CD8-positive, alpha-beta T cell (primary cell): ENCODE measurements at regions of chr6 and their contacts with region 1.

Region 1: DNA sequence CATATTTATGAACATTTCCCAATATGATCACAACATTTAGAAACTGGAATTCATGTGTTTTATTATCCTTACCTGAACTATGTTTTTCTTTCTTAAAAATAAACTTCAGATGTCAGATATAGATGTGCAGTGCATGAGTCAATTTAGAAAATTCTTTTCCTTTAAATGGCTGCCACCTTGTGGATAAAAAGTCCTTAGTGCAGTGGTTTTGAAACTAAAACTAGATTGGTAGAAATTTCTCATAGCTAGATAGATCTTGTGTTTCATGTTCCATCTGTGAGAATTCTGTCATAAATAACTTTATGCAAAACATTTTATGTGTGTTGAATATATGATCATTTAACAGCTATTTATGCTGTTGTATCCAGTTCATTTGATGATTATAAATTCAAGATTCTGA is 134.9 kb downstream of the KLHL32 start:
- DNase-seq: peak in 2 of 9 experiments; percentile 40 to 54
- ATAC-seq: peak; percentile 42
- H3K4me3 ChIP-seq: no peak overlapping the region
- H3K4me3 Mint-ChIP-seq: no peak overlapping the region
- H3K27ac ChIP-seq: no peak overlapping the region
- H3K27ac Mint-ChIP-seq: no peak overlapping the region
- H3K4me1 ChIP-seq: no peaks in the 10 kb centered on the region
- H3K4me1 Mint-ChIP-seq: no peaks in the 10 kb centered on the region
- H3K27me3 ChIP-seq: no peaks in the 10 kb centered on the region
- H3K27me3 Mint-ChIP-seq: no peaks in the 10 kb centered on the region
- CTCF ChIP-seq: peak; percentile 71

Region 2: DNA sequence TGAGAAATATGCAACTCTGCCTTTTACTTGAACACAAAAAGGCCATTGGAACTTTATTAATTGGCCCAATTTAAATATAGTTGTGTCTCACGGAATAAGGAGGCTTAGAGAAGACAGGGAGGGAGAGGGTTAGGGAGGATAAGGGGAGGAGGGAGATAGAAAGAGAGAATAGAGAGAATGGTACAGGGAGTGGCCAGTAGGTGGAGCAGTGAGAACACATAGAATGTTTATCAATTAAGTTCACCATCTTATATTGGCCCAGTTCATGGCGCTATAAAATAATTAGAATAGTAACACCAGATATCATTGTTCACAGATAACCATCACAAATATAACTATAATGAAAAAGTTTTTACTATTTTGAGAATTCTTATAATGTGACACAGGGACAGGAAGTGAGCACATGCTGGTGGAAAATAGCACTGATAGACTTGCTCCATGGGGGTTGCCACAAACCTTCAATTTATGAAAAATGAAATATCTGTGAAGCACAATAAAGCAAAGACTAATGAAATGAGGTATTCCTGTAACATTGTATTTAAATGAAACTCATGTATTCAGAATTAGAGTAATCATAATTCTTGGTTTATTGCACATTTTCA is 1856.2 kb before region 1 on chr6:
- CTCF ChIA-PET with region 1: no interaction called
- POLR2A ChIA-PET with region 1: no interaction called
- intact Hi-C with region 1: loop called in 1 of 2 experiments (anchors 5 kb)
- DNase-seq: peak in 2 of 9 experiments; percentile 11 to 13
- ATAC-seq: no peak
- H3K4me3 ChIP-seq: no peak overlapping the region
- H3K4me3 Mint-ChIP-seq: no peak overlapping the region
- H3K27ac ChIP-seq: no peak overlapping the region
- H3K27ac Mint-ChIP-seq: no peak overlapping the region
- H3K4me1 ChIP-seq: no peaks in the 10 kb centered on the region
- H3K4me1 Mint-ChIP-seq: no peaks in the 10 kb centered on the region
- H3K27me3 ChIP-seq: no peaks in the 10 kb centered on the region
- H3K27me3 Mint-ChIP-seq: no peaks in the 10 kb centered on the region
- CTCF ChIP-seq: peak; percentile 43

Region 3: DNA sequence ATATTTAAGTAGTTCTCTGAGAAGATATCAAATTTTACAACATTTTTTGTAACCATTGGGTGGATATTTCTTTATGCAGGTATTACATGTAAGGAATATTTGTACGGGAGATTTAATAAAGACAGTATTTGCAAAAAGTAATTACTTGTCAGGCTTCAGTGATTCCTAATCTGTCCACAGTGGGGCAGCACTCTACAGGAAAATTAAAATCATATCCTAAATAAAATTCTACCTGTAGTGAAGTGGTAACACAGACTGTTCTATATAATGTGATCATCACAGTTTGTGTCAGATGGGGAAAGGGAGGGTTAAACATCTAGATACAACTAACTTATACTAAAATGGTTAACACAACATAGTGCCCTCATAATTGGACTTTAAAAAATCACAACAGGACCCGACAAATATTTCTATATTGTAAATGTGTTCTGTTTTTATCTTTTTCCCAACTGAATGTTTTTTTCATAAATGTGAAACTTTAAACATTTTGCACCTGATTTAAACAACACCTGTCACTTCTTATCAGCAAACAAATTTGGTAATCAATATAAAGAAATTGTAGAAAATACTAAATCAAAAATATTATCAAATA is 1627.7 kb before region 1 on chr6:
- CTCF ChIA-PET with region 1: no interaction called
- POLR2A ChIA-PET with region 1: no interaction called
- intact Hi-C with region 1: loop called (anchors 2 kb)
- DNase-seq: peak in 6 of 9 experiments; percentile 4 to 41 (median 32)
- ATAC-seq: no peak
- H3K4me3 ChIP-seq: no peak overlapping the region
- H3K4me3 Mint-ChIP-seq: no peak overlapping the region
- H3K27ac ChIP-seq: no peak overlapping the region
- H3K27ac Mint-ChIP-seq: no peak overlapping the region
- H3K4me1 ChIP-seq: no peaks in the 10 kb centered on the region
- H3K4me1 Mint-ChIP-seq: no peaks in the 10 kb centered on the region
- H3K27me3 ChIP-seq: no peaks in the 10 kb centered on the region
- H3K27me3 Mint-ChIP-seq: no peaks in the 10 kb centered on the region
- CTCF ChIP-seq: peak; percentile 70

Region 4: DNA sequence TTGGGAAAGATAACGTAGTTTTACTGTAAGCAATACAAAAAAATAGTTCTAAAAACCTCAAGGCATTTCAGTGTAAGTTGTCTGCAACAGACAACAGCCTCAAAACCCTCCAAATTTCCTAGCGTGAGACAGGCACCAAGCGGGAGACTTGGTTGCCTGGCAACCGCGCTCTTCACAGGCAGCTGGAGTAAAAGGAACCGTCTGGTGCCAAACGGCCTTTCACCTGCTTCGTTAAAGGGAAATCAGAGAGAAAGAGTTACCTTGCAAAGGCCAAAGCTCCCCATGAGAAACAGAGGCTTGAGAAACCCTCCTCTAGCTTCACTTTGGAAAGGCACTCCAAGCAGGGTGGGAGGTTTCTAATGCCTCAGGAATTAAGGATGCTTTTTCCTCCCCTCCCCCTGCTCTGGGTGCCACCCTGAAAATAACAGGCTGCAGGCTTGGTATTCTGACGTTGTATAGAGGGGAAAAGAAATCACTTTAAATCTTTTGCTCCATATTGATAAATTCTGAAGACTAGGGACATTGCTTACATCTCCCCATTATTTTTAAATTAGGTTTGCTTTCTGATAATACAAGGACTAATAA is 667.6 kb before region 1 on chr6:
- CTCF ChIA-PET with region 1: no interaction called
- POLR2A ChIA-PET with region 1: no interaction called
- intact Hi-C with region 1: loop called in 1 of 2 experiments (anchors 10 kb)
- DNase-seq: peak in 2 of 9 experiments; percentile 12 to 27
- ATAC-seq: no peak
- H3K4me3 ChIP-seq: no peak overlapping the region
- H3K4me3 Mint-ChIP-seq: no peak overlapping the region
- H3K27ac ChIP-seq: no peak overlapping the region
- H3K27ac Mint-ChIP-seq: no peak overlapping the region
- H3K4me1 ChIP-seq: no peaks in the 10 kb centered on the region
- H3K4me1 Mint-ChIP-seq: peaks cover 4% of the 10 kb centered on the region
- H3K27me3 ChIP-seq: no peaks in the 10 kb centered on the region
- H3K27me3 Mint-ChIP-seq: peaks cover 7% of the 10 kb centered on the region
- CTCF ChIP-seq: no peak

Region 5: DNA sequence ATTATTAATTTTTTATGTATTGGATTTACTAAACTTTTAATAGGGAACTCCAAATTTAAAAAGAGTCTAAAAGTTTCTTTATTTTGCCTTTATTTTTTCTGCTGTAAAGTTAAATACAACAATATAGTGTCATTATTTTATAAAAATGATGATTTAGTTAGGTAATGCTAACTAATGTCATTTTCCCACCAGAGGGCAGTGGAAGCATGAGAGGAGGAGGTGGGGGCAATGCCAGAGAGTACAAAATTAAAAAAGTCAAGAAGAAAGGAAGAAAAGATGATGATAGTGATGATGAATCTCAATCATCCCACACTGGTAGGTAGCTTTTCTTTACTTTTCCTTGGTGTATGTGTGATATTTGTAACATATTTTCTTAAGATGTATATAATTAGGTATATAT is 516.8 kb before region 1 on chr6:
- CTCF ChIA-PET with region 1: no interaction called
- POLR2A ChIA-PET with region 1: no interaction called
- intact Hi-C with region 1: loop called (anchors 2 kb)
- DNase-seq: peak in 2 of 9 experiments; percentile 26 to 38
- ATAC-seq: no peak
- H3K4me3 ChIP-seq: no peak overlapping the region
- H3K4me3 Mint-ChIP-seq: no peak overlapping the region
- H3K27ac ChIP-seq: no peak overlapping the region
- H3K27ac Mint-ChIP-seq: no peak overlapping the region
- H3K4me1 ChIP-seq: no peaks in the 10 kb centered on the region
- H3K4me1 Mint-ChIP-seq: no peaks in the 10 kb centered on the region
- H3K27me3 ChIP-seq: no peaks in the 10 kb centered on the region
- H3K27me3 Mint-ChIP-seq: no peaks in the 10 kb centered on the region
- CTCF ChIP-seq: peak; percentile 58

Region 6: DNA sequence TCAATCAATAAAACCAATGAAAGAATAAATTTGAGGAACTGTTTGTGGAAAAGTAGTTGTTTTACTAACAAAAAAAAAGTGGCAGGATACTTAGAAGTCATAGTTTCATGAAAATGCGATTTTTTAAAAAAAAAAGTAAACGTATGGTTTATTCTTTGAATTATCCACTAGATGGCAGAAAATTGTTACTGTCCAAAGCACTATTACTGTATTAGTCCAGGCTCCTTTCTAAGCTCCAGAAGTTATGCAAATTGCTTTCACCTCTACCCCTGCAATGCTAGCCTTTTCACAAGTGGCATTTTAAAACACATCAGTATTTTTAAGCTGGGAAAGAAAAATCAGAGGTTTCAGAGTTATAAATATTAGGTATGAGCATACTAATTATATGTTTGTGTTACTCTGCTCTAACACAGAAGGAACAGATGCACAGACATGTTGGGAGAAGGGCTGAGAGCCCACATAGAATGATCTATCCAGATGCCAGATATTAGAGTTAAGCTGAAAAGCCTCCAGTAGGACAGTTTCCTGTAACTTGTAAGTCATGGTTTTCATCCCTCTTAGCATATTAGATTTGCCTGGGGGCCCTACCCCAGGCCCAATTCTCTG is 432.6 kb before region 1 on chr6:
- CTCF ChIA-PET with region 1: interaction called, 38 read pairs
- POLR2A ChIA-PET with region 1: interaction called, 4 read pairs
- intact Hi-C with region 1: loop called (anchors 1 kb)
- DNase-seq: peak in 2 of 9 experiments; percentile 15 to 35
- ATAC-seq: peak; percentile 36
- H3K4me3 ChIP-seq: no peak overlapping the region
- H3K4me3 Mint-ChIP-seq: no peak overlapping the region
- H3K27ac ChIP-seq: no peak overlapping the region
- H3K27ac Mint-ChIP-seq: no peak overlapping the region
- H3K4me1 ChIP-seq: no peaks in the 10 kb centered on the region
- H3K4me1 Mint-ChIP-seq: no peaks in the 10 kb centered on the region
- H3K27me3 ChIP-seq: no peaks in the 10 kb centered on the region
- H3K27me3 Mint-ChIP-seq: peaks cover 9% of the 10 kb centered on the region
- CTCF ChIP-seq: peak; percentile 44

Region 7: DNA sequence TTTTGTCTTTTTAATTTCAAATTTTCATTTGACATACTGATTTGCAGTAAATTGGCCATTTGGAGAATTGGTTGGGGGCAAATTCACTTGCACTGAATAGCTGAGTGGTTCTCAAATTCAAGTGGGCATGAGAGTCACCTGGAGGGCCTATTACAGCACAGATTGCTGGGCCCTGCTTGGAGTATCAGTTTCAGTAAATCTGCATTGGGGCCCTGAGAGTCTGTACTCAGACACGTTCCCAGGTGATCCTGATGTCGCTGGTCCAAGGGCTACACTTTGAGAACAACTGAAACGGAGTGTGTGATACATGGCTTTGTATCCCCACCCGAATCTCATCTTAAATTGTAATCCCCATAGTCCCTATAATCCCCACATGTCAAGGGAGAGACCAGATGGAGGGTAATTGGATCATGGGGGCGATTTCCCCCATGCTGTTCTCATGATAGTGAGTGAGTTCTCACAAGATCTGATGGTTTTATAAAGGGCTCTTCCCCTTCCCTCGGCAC is 19.1 kb before region 1 on chr6:
- CTCF ChIA-PET with region 1: no interaction called
- POLR2A ChIA-PET with region 1: no interaction called
- intact Hi-C with region 1: no loop called
- DNase-seq: no peak
- ATAC-seq: no peak
- H3K4me3 ChIP-seq: no peak overlapping the region
- H3K4me3 Mint-ChIP-seq: no peak overlapping the region
- H3K27ac ChIP-seq: no peak overlapping the region
- H3K27ac Mint-ChIP-seq: no peak overlapping the region
- H3K4me1 ChIP-seq: no peaks in the 10 kb centered on the region
- H3K4me1 Mint-ChIP-seq: no peaks in the 10 kb centered on the region
- H3K27me3 ChIP-seq: no peaks in the 10 kb centered on the region
- H3K27me3 Mint-ChIP-seq: peaks cover 5% of the 10 kb centered on the region
- CTCF ChIP-seq: no peak

Region 8: GRCh38 chr6:97085772-97086171 is 26.3 kb after region 1 on chr6:
- CTCF ChIA-PET with region 1: no interaction called
- POLR2A ChIA-PET with region 1: no interaction called
- intact Hi-C with region 1: no loop called
- DNase-seq: no peak
- ATAC-seq: no peak
- H3K4me3 ChIP-seq: no peak overlapping the region
- H3K4me3 Mint-ChIP-seq: no peak overlapping the region
- H3K27ac ChIP-seq: no peak overlapping the region
- H3K27ac Mint-ChIP-seq: no peak overlapping the region
- H3K4me1 ChIP-seq: no peaks in the 10 kb centered on the region
- H3K4me1 Mint-ChIP-seq: peaks cover 4% of the 10 kb centered on the region
- H3K27me3 ChIP-seq: no peaks in the 10 kb centered on the region
- H3K27me3 Mint-ChIP-seq: no peaks in the 10 kb centered on the region
- CTCF ChIP-seq: no peak

Region 9: GRCh38 chr6:97195117-97195516 is 135.6 kb after region 1 on chr6:
- CTCF ChIA-PET with region 1: no interaction called
- POLR2A ChIA-PET with region 1: no interaction called
- intact Hi-C with region 1: no loop called
- DNase-seq: no peak
- ATAC-seq: no peak
- H3K4me3 ChIP-seq: no peak overlapping the region
- H3K4me3 Mint-ChIP-seq: no peak overlapping the region
- H3K27ac ChIP-seq: no peak overlapping the region
- H3K27ac Mint-ChIP-seq: no peak overlapping the region
- H3K4me1 ChIP-seq: no peaks in the 10 kb centered on the region
- H3K4me1 Mint-ChIP-seq: no peaks in the 10 kb centered on the region
- H3K27me3 ChIP-seq: no peaks in the 10 kb centered on the region
- H3K27me3 Mint-ChIP-seq: no peaks in the 10 kb centered on the region
- CTCF ChIP-seq: no peak